CD4-positive, alpha-beta T cell (primary cell): ENCODE measurements at regions of chr14 and their contacts with region 1.

Region 1: GRCh38 chr14:52299692-52300278 is 14.3 kb upstream of the PTGER2 start:
- DNase-seq: peak in 3 of 14 experiments; percentile 68 to 77 (median 70)
- ATAC-seq: peak; percentile 57
- H3K4me3 ChIP-seq: no peak overlapping the region
- H3K4me3 Mint-ChIP-seq: no peak overlapping the region
- H3K27ac ChIP-seq: no peak overlapping the region
- H3K27ac Mint-ChIP-seq: no peak overlapping the region
- H3K4me1 ChIP-seq: no peaks in the 10 kb centered on the region
- H3K4me1 Mint-ChIP-seq: peaks cover 14% of the 10 kb centered on the region
- H3K27me3 ChIP-seq: no peaks in the 10 kb centered on the region
- H3K27me3 Mint-ChIP-seq: no peaks in the 10 kb centered on the region
- CTCF ChIP-seq: peak; percentile 76

Region 2: DNA sequence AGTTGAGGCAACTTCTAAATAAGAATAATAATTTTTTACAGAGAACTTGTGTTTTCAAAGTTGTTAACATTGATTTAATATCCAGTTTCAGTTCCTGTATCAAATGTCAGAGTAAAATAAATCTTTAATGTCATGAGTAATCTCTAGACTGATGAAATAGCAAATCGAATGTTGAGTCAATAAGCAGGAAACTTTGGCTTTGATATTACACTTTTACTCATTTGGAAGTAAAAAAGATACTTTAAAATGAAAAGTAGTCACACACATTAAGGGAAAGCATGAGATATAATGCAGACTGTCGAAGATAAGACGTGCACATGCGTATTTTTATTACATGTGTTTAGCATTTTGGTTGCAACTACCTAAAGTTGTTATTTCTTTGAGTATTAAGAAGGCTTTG is 110.5 kb before region 1 on chr14:
- CTCF ChIA-PET with region 1: no interaction called
- POLR2A ChIA-PET with region 1: no interaction called
- intact Hi-C with region 1: no loop called
- DNase-seq: no peak
- ATAC-seq: no peak
- H3K4me3 ChIP-seq: no peak overlapping the region
- H3K4me3 Mint-ChIP-seq: no peak overlapping the region
- H3K27ac ChIP-seq: no peak overlapping the region
- H3K27ac Mint-ChIP-seq: no peak overlapping the region
- H3K4me1 ChIP-seq: no peaks in the 10 kb centered on the region
- H3K4me1 Mint-ChIP-seq: no peaks in the 10 kb centered on the region
- H3K27me3 ChIP-seq: no peaks in the 10 kb centered on the region
- H3K27me3 Mint-ChIP-seq: no peaks in the 10 kb centered on the region
- CTCF ChIP-seq: no peak

Region 3: DNA sequence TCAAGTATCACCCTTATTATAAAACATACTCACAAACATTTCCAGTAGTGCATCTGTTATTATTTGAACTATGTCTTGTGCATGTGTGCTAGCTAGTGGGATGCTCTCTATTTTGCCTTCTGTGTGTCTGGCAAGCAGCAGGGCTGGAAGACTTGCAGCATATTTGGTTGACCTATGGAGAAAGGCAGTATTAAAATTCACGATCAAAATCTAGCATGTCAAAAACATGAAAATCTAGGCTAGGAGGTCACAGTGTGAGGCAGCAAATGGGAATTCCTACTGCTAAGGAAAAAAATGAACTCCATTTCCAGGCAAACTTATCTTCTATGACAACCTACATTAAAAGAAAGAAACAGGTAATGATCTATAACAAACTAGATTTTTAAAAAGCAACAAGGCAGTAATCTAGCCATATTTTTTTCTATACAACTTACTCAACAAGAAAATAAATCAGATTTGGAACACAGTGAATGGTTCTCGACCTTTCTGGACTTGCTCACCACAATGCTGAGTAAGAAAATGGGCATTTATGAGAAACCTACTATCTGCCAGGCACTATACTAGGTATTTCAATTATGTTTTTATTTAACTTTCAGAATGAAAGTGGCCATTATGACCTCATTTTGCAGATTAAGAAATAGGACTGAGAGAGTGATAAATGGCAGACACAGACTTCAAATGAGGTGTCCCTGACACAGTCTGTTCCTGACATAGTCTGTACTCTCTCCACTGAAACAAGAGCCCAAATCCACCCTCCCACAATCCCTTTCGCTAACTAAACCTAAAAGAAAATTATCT is 155.7 kb after region 1 on chr14:
- CTCF ChIA-PET with region 1: no interaction called
- POLR2A ChIA-PET with region 1: no interaction called
- intact Hi-C with region 1: no loop called
- DNase-seq: no peak
- ATAC-seq: no peak
- H3K4me3 ChIP-seq: no peak overlapping the region
- H3K4me3 Mint-ChIP-seq: no peak overlapping the region
- H3K27ac ChIP-seq: no peak overlapping the region
- H3K27ac Mint-ChIP-seq: no peak overlapping the region
- H3K4me1 ChIP-seq: no peaks in the 10 kb centered on the region
- H3K4me1 Mint-ChIP-seq: no peaks in the 10 kb centered on the region
- H3K27me3 ChIP-seq: no peaks in the 10 kb centered on the region
- H3K27me3 Mint-ChIP-seq: no peaks in the 10 kb centered on the region
- CTCF ChIP-seq: no peak

Region 4: GRCh38 chr14:52473557-52473956 is 173.8 kb after region 1 on chr14:
- CTCF ChIA-PET with region 1: no interaction called
- POLR2A ChIA-PET with region 1: interaction called, 3 read pairs
- intact Hi-C with region 1: loop called (anchors 1 kb)
- DNase-seq: peak in 3 of 14 experiments; percentile 71 to 75 (median 72)
- ATAC-seq: peak; percentile 49
- H3K4me3 ChIP-seq: no peak overlapping the region
- H3K4me3 Mint-ChIP-seq: no peak overlapping the region
- H3K27ac ChIP-seq: no peak overlapping the region
- H3K27ac Mint-ChIP-seq: no peak overlapping the region
- H3K4me1 ChIP-seq: no peaks in the 10 kb centered on the region
- H3K4me1 Mint-ChIP-seq: peaks cover 9% of the 10 kb centered on the region
- H3K27me3 ChIP-seq: no peaks in the 10 kb centered on the region
- H3K27me3 Mint-ChIP-seq: no peaks in the 10 kb centered on the region
- CTCF ChIP-seq: peak; percentile 62

Region 5: DNA sequence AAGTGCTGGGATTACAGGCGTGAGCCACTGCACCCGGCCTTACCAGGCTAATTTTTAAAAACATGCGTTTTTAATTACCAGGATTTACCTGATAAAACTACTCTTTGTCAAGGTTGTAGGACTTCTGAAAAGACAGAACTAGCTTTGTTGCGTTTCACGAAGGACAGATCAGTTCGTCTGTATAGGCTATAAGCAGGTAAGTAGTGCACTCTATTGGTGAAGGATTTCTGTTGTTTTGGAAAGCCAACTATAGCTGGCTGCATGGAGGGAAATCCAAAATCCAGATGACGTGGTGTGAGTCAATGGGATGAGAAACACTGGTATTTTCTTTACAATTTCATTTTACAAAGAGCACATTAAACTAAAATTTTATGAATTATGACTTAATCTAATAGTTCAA is 477.0 kb after region 1 on chr14:
- CTCF ChIA-PET with region 1: no interaction called
- POLR2A ChIA-PET with region 1: no interaction called
- intact Hi-C with region 1: loop called in 1 of 2 experiments (anchors 10 kb)
- DNase-seq: peak in 3 of 14 experiments; percentile 19 to 34 (median 32)
- ATAC-seq: peak; percentile 56
- H3K4me3 ChIP-seq: no peak overlapping the region
- H3K4me3 Mint-ChIP-seq: no peak overlapping the region
- H3K27ac ChIP-seq: no peak overlapping the region
- H3K27ac Mint-ChIP-seq: peak overlapping the region; percentile 37
- H3K4me1 ChIP-seq: no peaks in the 10 kb centered on the region
- H3K4me1 Mint-ChIP-seq: no peaks in the 10 kb centered on the region
- H3K27me3 ChIP-seq: no peaks in the 10 kb centered on the region
- H3K27me3 Mint-ChIP-seq: no peaks in the 10 kb centered on the region
- CTCF ChIP-seq: peak; percentile 44

Region 6: GRCh38 chr14:52961060-52961639 is 661.4 kb after region 1 on chr14:
- CTCF ChIA-PET with region 1: no interaction called
- POLR2A ChIA-PET with region 1: no interaction called
- intact Hi-C with region 1: loop called (anchors 2 to 5 kb)
- DNase-seq: peak; percentile 32 to 82 (median 49)
- ATAC-seq: peak; percentile 91
- H3K4me3 ChIP-seq: no peak overlapping the region
- H3K4me3 Mint-ChIP-seq: no peak overlapping the region
- H3K27ac ChIP-seq: peak overlapping the region in 1 of 2 donors; percentile 17
- H3K27ac Mint-ChIP-seq: peak overlapping the region; percentile 11
- H3K4me1 ChIP-seq: peaks cover 9% of the 10 kb centered on the region
- H3K4me1 Mint-ChIP-seq: peaks cover 9% of the 10 kb centered on the region
- H3K27me3 ChIP-seq: no peaks in the 10 kb centered on the region
- H3K27me3 Mint-ChIP-seq: no peaks in the 10 kb centered on the region
- CTCF ChIP-seq: peak; percentile 62

Region 7: DNA sequence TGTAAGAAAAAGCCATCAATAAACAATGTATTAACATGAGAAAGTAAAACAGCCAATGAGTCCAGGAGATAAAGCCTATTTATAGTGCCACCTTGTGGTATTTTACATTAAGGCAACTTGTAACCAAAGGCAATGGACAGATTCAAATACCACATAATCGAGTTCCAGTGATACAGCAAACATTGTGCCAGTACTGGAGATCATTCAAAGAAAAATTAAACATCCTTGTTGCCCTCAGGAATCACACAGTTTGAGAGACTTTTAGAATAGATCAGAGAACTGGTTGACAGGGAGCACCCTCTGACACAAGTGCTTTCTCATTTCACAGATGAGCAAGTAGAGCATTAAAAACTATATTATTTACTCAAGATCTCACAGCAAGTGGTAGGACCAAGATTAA is 755.2 kb after region 1 on chr14:
- CTCF ChIA-PET with region 1: no interaction called
- POLR2A ChIA-PET with region 1: no interaction called
- intact Hi-C with region 1: loop called (anchors 5 to 10 kb)
- DNase-seq: peak in 3 of 14 experiments; percentile 47 to 62 (median 61)
- ATAC-seq: peak; percentile 51
- H3K4me3 ChIP-seq: no peak overlapping the region
- H3K4me3 Mint-ChIP-seq: no peak overlapping the region
- H3K27ac ChIP-seq: no peak overlapping the region
- H3K27ac Mint-ChIP-seq: no peak overlapping the region
- H3K4me1 ChIP-seq: no peaks in the 10 kb centered on the region
- H3K4me1 Mint-ChIP-seq: peaks cover 4% of the 10 kb centered on the region
- H3K27me3 ChIP-seq: no peaks in the 10 kb centered on the region
- H3K27me3 Mint-ChIP-seq: no peaks in the 10 kb centered on the region
- CTCF ChIP-seq: peak; percentile 90